HEK293T (cell line): ENCODE measurements at regions of chr2 and their contacts with region 1.

Region 1: DNA sequence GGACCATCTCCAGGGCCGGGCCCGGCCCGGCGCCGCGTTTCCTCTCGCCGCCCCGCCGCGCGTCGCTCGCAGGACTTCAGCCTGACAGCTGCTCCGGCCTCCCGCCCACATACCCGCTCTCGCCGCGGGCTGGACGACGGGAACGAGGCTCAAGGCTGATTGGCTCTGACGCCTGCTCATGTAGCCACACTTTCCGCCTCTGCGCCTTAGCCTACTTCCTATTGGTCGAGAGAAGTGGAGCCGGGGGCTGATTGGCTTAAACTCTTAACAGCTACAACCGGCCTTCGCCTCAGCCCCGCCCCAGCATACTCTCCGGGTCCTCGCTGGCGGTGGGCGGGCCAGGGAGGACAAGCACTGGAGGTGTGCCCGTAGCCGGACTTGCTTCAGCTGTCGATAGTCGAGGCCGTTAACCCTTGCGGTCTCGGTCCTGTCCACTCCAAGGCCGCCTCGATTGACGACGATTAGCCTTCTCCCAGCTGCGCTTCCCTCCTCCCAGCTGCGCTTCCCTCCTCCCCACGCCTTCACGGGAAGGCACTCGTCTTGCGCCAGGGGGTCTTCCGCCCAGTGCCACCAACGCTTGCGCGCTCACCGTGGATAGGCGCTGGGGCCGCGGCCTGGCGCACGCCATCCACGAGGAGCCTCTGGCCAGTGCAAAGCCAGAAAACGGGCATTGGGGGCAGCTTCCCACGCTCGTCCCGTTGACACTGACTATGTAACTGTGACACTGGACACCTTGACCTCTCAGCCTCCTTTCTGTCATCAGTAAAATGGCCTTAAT is at the start of gene PRADC1:
- DNase-seq: peak; percentile 95

Region 2: GRCh38 chr2:73212448-73213176 is 20.7 kb before region 1 on chr2:
- CTCF ChIA-PET with region 1: interaction called, 6 read pairs
- POLR2A ChIA-PET with region 1: interaction called, 53 read pairs
- DNase-seq: peak; percentile 82

Region 3: DNA sequence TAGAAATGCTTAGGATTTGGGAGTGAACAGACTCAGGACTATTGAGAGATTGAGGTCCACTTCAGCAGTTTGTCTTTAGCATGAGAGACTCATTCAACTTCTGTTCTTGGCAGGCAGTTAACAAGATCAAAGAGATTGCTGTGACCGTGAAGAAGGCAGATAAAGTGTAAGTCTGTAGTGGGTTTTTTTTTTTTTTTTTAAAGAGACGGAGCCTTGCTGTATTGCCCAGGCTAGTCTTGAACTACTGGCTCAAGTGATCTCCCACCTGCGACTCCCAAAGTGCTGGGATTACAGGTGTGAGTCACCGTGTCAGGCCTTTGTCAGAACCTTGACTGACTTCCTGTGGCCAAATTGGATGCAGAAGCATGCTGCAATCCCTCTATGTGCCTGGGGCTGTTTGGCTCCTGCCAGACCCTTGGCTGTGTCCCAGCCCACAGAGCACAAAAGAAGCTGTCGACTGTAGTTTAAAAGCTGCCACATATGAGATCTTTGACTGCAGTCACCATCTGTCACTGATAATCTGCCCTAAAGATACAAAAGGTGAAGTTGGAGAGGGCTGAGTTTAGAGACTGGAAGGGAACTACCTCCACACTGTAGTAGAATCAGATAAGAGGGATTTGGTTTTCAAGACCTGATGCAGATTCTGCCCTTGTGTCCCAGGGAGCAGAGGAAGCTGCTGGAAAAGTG is 10.7 kb after region 1 on chr2:
- CTCF ChIA-PET with region 1: no interaction called
- POLR2A ChIA-PET with region 1: interaction called, 31 read pairs
- DNase-seq: no peak

Region 4: DNA sequence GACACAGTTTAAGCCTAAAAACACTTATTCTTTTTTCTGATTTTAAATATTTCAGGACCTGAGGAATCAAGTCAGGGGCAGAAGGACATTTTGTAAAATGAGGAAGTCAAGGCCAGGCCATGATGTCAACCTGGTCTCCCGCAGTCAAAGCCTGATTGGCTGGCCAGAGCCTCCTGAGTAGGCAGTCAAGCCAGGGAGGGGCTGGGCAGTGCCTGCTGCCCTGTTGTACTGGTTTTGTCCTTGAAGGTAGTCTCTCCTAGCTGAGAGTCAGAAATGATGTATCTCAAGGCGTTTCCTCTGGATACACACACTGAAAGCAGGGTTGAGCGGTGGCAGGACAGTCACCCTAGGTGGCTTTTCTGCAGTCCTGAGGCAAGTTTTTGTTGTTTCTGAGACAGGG is 20.6 kb after region 1 on chr2:
- CTCF ChIA-PET with region 1: no interaction called
- POLR2A ChIA-PET with region 1: interaction called, 32 read pairs
- DNase-seq: no peak

Region 5: DNA sequence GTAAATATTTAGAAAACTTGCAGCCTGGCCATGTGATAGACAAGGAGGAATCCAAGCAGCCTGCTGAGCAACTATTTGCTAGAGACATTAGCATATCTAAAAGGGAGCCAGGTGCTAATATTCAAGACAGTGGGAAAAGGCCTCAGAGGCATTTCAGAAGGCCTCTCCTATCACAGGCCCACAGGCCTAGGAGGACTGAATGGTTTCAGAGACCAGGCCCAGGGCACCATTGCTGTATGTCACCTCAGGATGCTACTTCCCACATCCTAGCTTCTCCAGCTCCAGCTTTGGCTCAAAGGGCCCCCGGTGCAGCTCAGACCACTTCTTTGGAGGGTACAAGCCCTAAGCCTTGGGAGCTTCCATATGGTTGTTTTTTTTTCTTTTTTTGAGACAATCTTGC is 405.1 kb after region 1 on chr2:
- CTCF ChIA-PET with region 1: no interaction called
- POLR2A ChIA-PET with region 1: no interaction called
- DNase-seq: no peak